ENCODE measurements at regions of chr17 and their contacts with region 1.

Region 1: GRCh38 chr17:46154151-46154816 is 38.9 kb downstream of the KANSL1 start:
- DNase-seq: peak; percentile 75
- H3K4me3 Mint-ChIP-seq: peak overlapping the region; percentile 70
- H3K27ac Mint-ChIP-seq: peak overlapping the region; percentile 87
- H3K4me1 Mint-ChIP-seq: peaks cover 67% of the 10 kb centered on the region
- H3K27me3 Mint-ChIP-seq: no peaks in the 10 kb centered on the region

Region 2: DNA sequence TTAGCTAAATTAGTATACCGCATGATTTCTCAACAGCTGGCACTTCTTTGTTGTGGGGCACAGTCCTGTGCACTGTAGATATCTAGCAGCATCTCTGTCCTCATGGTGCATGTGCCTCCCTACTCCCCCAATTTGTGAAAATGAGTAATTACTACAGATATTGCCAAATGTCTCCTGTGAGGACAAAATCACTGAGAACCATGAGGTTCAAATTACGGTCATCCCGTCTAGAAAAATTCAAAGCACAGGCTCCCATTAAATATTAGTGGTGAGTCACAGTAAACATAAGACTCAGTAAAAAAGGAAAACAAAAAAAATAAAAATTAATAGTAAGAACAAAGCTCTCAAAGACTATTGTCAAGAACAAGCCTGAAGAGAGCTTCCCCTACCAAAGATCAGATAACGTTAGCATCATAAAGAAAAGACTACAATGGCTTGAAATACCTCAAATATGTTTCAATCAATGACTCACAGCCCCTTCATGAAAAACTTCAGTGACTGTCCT is 97.4 kb before region 1 on chr17:
- intact Hi-C with region 1: loop called (anchors 1 kb)
- DNase-seq: no peak
- H3K4me3 Mint-ChIP-seq: no peak overlapping the region
- H3K27ac Mint-ChIP-seq: no peak overlapping the region
- H3K4me1 Mint-ChIP-seq: peaks cover 25% of the 10 kb centered on the region
- H3K27me3 Mint-ChIP-seq: no peaks in the 10 kb centered on the region

Region 3: GRCh38 chr17:46089389-46089965 is 64.8 kb before region 1 on chr17:
- intact Hi-C with region 1: loop called (anchors 2 kb)
- DNase-seq: no peak
- H3K4me3 Mint-ChIP-seq: peak overlapping the region; percentile 10
- H3K27ac Mint-ChIP-seq: peak overlapping the region; percentile 49
- H3K4me1 Mint-ChIP-seq: peaks cover 27% of the 10 kb centered on the region
- H3K27me3 Mint-ChIP-seq: no peaks in the 10 kb centered on the region

Region 4: GRCh38 chr17:46097497-46097896 is 56.8 kb before region 1 on chr17:
- intact Hi-C with region 1: loop called (anchors 1 kb)
- DNase-seq: no peak
- H3K4me3 Mint-ChIP-seq: no peak overlapping the region
- H3K27ac Mint-ChIP-seq: no peak overlapping the region
- H3K4me1 Mint-ChIP-seq: peaks cover 42% of the 10 kb centered on the region
- H3K27me3 Mint-ChIP-seq: no peaks in the 10 kb centered on the region

Region 5: DNA sequence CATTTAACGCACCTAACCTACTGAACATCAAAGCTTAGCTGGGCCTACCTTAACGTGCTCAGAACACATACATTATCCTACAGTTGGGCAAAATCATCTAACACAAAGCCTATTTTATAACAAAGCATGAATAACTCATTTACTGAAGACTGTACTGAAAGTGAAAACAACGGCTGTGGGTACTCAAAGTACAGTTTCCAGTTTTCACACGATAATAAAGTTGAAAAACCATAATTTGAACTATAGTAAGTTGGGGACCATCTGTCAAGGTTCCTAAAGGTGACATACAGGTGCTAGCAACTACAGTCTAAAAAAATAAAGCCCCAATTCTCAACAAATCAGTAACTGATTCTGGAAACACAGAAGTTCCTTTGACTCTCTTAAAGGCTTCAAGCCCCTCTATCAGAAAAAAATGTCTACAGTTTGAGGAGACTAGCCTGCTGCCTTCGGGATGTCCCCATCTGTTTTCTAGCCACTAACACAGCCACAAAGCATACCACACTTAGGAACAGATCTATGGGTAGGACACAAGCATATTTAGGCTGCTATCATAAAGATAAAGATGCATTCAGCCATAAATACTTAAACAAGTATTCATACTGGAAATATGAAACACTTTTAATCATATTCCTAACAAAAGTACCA is 32.3 kb before region 1 on chr17:
- intact Hi-C with region 1: loop called (anchors 2 kb)
- DNase-seq: no peak
- H3K4me3 Mint-ChIP-seq: peak overlapping the region; percentile 21
- H3K27ac Mint-ChIP-seq: peak overlapping the region; percentile 31
- H3K4me1 Mint-ChIP-seq: peaks cover 59% of the 10 kb centered on the region
- H3K27me3 Mint-ChIP-seq: no peaks in the 10 kb centered on the region

Region 6: DNA sequence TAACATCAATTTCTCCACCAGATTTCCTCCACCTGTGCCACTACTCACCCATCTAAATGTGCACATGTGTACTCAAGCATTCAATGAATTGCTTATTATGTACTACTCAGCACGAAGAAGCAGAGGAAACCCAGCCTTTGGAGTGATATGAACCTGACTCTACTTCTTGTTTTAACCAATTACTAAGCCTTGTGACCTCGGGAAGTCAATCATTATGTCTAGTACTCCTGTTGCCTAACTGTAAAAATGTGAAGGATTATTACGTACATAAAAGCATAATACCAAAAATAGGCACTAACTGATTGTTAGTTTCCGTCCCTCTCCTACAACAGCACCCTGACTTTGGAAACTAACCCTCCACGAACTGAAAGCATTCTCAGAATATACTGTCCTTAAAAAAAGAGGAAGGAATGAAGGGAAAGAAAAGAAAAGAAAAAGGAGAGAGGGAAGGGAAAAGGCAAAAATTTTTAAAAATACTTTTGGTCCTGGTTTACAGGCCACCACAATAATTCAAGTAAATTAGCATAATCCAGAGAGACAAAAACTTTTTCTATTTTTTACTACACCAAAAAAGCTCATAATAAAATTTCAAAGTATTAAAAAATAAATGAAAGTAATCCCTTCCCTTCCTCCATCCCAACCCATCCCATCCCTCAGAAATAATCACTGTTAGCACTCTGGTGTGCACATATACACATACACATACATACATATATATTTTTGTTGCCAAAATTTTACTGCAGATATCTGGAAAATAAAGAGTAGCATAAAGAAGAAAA is 14.7 kb before region 1 on chr17:
- intact Hi-C with region 1: loop called (anchors 2 kb)
- DNase-seq: no peak
- H3K4me3 Mint-ChIP-seq: no peak overlapping the region
- H3K27ac Mint-ChIP-seq: no peak overlapping the region
- H3K4me1 Mint-ChIP-seq: peaks cover 75% of the 10 kb centered on the region
- H3K27me3 Mint-ChIP-seq: no peaks in the 10 kb centered on the region

Region 7: GRCh38 chr17:46179375-46179999 is 25.2 kb after region 1 on chr17:
- intact Hi-C with region 1: loop called (anchors 1 kb)
- DNase-seq: no peak
- H3K4me3 Mint-ChIP-seq: peak overlapping the region; percentile 66
- H3K27ac Mint-ChIP-seq: peak overlapping the region; percentile 81
- H3K4me1 Mint-ChIP-seq: peaks cover 67% of the 10 kb centered on the region
- H3K27me3 Mint-ChIP-seq: no peaks in the 10 kb centered on the region